Left cardiac atrium (tissue), 4 donors: ENCODE measurements at regions of chr16 and their contacts with region 1.

Region 1: GRCh38 chr16:67521095-67521804 is 7.4 kb upstream of the RIPOR1 start:
- DNase-seq: peak; percentile 95
- ATAC-seq: peak; percentile 92 to 94

Region 2: DNA sequence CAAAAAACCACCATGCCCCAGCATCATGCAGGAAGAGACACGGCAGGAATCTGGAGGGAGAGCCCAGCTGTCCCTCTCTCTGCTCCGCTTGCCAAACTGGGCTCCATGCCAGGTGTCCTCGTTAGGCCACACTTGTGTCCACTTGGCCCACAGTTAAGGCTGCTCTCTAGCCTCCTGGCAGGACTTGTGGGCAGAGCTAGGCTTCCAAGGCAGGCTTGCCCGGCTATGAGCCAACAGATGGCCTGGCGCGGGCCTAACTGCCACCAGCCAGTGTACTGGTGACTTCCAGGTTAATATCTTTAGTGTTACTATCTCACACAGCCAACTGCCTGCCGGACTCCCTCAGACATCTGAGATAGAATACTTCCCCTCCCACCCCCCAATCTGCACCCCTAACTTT is 50.9 kb before region 1 on chr16:
- intact Hi-C with region 1: no loop called
- DNase-seq: peak; percentile 87
- ATAC-seq: peak; percentile 79 to 96

Region 3: DNA sequence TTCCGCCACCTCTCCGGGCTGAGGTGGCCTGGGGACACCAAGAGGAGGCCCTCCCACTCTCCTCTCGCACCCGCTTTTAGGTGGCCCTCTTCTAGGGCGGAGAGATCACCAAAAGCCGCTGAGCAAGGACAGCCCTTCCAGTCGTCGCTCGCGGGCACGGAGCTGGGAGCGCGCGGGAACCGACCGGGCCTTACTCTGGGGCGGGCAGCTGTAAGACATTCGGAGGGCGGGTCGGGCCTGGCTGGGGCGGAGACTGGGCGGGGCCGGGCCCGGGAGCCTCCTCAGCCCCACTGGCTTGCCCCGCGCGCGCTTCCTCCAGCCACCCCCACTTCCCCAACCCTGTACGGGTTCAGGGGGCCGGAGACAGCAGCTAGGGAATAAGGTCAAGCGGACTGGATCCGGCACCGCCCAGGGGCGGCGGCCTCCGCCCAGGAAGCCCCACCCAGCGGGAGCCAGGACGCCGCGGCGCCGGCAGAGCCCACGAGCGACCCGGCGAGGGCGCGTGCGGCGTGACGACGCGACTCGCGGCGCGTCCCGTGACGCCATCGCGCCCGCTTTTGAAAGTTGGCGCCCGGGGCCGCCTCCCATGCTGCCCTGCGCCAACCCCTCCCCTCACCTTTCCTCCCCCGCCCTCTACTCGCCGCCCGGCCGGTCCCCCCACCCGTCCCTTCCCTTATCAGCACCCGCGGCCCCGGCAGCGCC is 40.7 kb after region 1 on chr16:
- intact Hi-C with region 1: loop called in 1 of 2 experiments (anchors 2 kb)
- DNase-seq: peak; percentile 97
- ATAC-seq: peak; percentile 91 to 96

Region 4: GRCh38 chr16:67598527-67598926 is 77.3 kb after region 1 on chr16:
- intact Hi-C with region 1: no loop called
- DNase-seq: no peak
- ATAC-seq: peak in 1 of 2 donors; percentile 89

Region 5: DNA sequence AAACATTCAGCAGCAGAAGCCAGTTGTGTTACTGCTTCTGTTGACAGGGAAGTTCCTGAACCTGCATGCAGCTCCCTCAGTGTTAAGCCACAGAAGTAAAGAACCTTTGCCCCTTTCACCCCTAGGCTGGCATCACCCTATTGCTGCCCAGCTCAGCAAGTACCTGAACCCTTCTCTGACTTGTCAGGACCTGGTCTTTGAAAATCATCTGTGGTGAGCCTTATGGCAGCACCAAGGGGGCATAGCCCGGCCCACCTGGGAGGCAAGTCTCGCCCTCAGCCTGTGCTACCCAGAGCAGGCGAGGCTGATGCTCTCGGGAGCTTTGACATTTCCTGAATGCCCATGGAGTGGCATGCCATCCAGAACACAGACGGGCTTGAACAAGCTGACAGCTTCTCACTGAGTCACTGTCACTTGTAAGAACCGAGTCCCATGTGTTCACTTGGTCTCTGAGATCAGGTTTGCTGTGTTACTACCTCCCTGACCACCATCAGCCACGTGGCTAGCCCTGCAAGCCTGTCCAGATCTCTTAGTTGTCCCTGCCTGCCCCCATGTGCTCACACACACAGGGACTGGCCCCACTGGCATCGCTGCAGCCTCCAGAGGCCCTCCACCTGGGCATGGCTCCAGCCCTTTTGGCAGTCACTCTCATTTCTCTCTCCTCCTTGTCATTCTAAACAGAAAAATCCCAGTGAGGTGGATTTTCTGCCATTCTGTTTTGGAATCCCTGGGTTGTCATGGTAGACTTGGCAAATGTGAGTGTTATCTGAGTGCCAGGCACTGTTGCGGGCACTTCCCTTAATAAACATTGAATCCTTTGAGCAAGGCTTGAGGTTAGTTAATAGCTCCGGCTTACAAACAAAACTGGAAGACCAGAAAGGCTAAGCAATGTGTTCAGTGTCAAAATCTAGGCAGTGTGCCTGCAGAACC is 120.8 kb after region 1 on chr16:
- intact Hi-C with region 1: loop called in 1 of 2 experiments (anchors 5 kb)
- DNase-seq: peak; percentile 73
- ATAC-seq: peak; percentile 67 to 89

Region 6: DNA sequence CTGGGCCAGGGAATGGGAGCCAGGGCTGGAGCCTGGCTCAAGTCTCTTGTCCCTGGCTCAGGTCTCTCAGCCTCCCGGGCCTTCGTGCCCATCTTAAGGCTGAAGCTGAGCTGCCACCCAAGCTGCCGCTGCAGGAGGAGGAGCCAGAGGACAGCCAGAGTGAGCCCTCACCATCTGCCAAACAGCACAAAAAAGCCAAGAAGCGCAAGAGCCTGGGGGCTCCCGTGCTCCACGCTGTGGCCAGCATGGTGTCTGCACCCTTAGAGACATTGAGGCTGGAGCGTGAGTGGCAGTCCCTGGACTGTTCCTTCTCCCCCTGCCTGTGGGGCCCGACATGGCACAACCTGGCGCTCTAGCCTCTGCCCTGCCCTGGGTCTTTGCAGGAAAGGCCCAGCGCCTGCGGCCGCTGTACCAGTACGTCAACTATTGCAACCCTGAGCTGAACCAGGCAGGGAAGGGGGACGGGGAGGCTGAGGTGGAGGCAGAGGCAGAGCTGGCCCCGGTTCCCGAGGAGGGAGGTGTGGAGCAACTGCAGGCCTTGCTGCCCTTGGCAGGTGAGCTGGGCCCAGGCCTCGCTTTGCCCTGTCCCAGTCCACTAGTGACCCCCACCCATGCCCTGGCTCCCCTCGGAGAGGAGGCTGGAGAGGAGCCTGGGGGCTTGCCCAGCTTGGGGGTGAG is 146.7 kb after region 1 on chr16:
- intact Hi-C with region 1: loop called (anchors 2 to 10 kb)
- DNase-seq: peak; percentile 89
- ATAC-seq: peak; percentile 84 to 88